Transverse colon (tissue), 4 donors: ENCODE measurements at regions of chr20 and their contacts with region 1.

Region 1: DNA sequence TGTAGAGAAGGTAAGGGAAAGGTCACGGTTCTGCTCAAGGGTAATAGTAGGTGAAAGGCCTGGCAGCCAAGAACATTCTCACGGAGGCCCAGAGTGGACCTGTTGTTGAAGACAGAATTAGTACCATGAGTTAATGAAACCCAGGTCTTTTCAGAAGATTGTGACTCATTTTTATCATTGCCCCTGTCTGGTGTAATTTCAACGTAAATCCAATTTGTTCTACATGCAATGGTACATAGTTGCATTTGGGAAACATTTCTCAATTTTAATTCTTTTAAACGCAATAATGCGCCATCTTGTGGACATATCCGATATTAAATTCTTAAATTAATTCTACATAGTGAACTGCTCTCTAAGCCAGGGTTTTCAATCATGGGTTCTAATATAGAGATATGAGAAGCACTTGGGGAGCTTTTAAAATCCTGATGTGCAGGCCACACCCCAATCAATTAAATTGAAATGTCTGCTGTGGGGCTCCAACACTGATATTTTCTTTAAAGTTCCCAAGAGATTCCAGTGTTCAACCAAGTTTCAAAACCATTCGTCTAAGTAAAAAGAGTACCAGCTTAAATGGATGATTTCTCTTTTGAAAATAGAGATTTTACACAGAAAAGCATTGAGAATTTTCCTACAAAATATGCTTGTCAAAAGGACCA is 257.4 kb downstream of the PLCB1 start:
- DNase-seq: no peak
- H3K4me3 ChIP-seq: no peak overlapping the region
- H3K27ac ChIP-seq: no peak overlapping the region
- H3K4me1 ChIP-seq: peaks cover 0 to 15% (median 0%) of the 10 kb centered on the region in 4 donors
- H3K27me3 ChIP-seq: no peaks in the 10 kb centered on the region
- CTCF ChIP-seq: peak; percentile 47 to 61 (median 51)
- EP300 ChIP-seq: no peak
- POLR2A ChIP-seq: no peak

Region 2: DNA sequence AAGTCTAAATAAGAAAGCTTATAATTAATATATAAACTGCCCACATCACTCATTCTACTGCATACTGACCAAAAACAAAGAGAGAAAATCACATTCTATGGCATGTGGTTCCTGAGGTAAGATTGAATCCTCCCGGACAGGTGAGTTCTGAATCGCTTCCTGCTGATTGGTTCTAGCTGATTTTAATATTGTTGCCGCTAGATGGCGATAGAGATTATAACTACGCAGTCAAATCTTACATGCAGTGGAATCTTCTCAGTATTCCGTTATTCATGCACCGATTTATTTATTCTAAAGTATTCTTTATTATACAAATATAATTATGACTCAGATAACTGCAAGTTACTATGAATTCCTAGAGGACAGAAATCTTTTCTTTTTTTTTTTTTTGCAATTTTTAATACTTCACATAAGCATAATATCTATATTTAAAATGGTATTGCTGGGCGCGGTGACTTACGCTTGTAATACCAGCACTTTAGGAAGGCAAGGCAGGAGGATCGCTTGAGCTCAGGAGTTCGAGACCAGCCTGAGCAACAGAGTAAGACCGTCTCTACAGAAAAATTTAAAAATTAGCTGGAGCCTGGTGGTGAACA is 345.7 kb before region 1 on chr20:
- in situ Hi-C with region 1: loop called in 1 of 4 experiments (anchors 25 kb)
- intact Hi-C with region 1: no loop called
- DNase-seq: no peak
- H3K4me3 ChIP-seq: no peak overlapping the region
- H3K27ac ChIP-seq: no peak overlapping the region
- H3K4me1 ChIP-seq: no peaks in the 10 kb centered on the region
- H3K27me3 ChIP-seq: no peaks in the 10 kb centered on the region
- CTCF ChIP-seq: peak; percentile 63 to 75 (median 73)
- EP300 ChIP-seq: no peak
- POLR2A ChIP-seq: no peak

Region 3: DNA sequence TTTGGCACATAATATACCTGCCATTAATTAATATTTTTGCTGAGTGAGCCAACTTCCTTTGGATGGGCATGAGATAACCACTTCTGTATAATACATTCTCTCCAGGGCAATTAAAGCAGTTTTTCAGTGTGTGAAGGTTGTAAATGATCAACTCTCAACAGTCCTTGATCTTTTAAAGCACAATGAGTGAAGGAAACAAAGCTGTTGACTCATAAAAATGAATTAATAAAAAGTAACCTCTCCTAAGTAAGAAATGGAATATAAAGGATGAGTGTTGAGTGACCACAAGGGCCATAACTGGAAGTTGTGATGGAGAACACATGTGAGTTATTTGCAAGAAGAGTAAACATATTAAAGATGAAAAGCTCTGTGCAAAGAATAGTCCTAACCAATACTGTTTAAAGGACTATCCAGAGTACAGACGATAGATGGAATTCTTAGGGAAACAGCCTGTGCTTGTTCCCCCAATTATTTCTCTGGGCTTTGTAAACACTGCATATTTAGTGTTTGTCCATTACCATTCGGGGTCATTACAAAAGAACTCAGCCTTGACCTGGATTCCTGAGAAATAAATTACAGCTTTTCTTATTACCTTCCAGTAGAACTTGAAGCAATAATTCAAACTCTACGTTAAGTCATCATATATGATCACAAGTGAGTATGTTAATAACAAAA is 188.8 kb after region 1 on chr20:
- in situ Hi-C with region 1: no loop called
- intact Hi-C with region 1: no loop called
- DNase-seq: no peak
- H3K4me3 ChIP-seq: no peak overlapping the region
- H3K27ac ChIP-seq: no peak overlapping the region
- H3K4me1 ChIP-seq: peaks cover 0 to 5% (median 0%) of the 10 kb centered on the region in 4 donors
- H3K27me3 ChIP-seq: no peaks in the 10 kb centered on the region
- CTCF ChIP-seq: no peak
- EP300 ChIP-seq: no peak
- POLR2A ChIP-seq: no peak